ENCODE measurements at regions of chr6 and their contacts with region 1.

Region 1: DNA sequence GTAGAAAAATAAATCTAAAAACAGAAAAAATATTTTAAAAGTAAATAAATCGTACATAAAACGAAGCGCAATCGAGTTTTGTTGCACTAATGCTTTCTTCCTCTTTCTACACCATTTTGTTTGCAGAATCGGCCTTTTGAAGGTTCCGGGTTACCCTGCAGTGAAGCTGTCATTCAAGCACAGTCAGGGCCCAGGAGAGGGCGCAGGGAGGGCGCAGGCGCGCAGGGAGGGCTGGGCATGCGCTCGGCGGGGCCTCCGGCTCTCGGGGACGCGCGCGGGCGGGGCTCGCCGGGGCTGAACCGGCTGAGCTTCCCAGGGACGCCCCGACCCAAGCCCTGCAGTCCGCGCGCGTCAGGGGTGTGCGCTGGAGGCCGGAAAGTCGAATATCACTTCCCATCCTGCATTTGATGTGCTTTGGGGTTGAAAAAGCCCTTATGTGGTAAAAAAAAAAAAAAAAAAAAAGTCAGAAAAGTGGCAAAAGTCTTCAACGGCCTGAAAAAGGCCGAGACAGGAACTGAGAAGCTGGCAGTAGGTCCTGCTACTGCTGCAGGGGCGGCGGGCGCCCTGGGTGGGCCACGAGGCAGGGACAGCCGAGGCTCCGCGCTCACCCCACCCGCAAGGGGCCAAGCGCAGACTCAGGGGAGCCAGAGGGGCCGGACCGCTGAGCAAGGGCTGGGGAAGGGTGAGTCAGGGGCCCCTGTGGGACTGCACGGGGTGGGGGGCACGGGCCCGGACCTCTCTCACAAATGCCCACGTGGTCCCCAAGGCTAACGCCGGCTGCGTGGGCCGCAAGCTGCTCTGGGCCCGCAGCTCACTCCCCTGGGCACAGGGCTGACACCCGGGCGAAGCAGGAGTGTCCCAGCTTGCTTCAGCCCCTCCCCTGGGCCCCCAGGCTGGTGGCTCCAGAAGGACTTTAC is 40.5 kb downstream of the THBS2 start:
- DNase-seq: peak; percentile 95
- ATAC-seq: peak; percentile 100
- H3K4me3 Mint-ChIP-seq: peak overlapping the region; percentile 55
- H3K27ac Mint-ChIP-seq: peak overlapping the region; percentile 73
- H3K4me1 Mint-ChIP-seq: peaks cover 32% of the 10 kb centered on the region
- H3K27me3 Mint-ChIP-seq: no peaks in the 10 kb centered on the region

Region 2: DNA sequence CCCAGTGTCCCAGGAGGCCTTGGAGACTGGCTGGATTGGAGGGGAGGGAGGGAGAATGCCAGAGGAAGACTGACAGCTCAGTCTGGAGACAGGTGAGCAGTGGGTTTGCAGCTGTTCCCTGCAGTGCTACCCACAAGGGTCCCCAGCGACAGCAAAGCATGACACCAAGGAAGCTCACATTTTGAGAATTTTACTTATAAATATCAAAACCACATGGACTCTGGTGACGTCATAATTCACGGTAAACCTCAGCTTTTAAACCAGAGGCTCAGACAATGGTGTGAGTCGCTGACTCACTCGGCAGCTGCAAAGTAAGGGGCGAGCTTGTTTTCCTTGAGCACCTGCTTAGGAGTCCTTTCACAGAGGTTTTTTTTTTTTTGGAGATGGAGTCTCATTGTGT is 24.7 kb before region 1 on chr6:
- CTCF ChIA-PET with region 1: interaction called, 11 read pairs
- DNase-seq: peak; percentile 63
- ATAC-seq: peak; percentile 75
- H3K4me3 Mint-ChIP-seq: no peak overlapping the region
- H3K27ac Mint-ChIP-seq: peak overlapping the region; percentile 76
- H3K4me1 Mint-ChIP-seq: peaks cover 32% of the 10 kb centered on the region
- H3K27me3 Mint-ChIP-seq: peaks cover 4% of the 10 kb centered on the region

Region 3: GRCh38 chr6:169766232-169766631 is 553.1 kb after region 1 on chr6:
- CTCF ChIA-PET with region 1: no interaction called
- DNase-seq: no peak
- ATAC-seq: no peak
- H3K4me3 Mint-ChIP-seq: no peak overlapping the region
- H3K27ac Mint-ChIP-seq: no peak overlapping the region
- H3K4me1 Mint-ChIP-seq: no peaks in the 10 kb centered on the region
- H3K27me3 Mint-ChIP-seq: no peaks in the 10 kb centered on the region